PC-9 (cell line): ENCODE measurements at regions of chr5 and their contacts with region 1.

Region 1: DNA sequence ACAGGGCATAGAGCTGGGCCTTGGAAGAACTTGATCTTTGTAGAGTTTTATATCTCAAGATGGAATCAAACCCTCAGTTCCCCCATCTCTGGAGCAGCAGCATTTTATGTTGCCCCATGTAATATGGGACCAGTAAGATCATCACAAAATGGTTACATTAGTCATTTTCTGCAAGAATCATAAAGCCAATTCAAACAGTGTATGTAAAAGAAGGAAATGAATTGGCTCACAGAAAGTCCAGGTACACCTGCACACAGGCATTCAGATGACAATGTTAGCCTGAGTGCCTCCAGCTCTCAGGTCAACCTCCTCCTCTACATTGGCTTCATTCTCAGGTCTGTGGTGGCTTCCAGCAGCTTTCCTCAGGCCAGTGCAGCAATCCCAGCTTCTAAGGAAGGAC is 35.1 kb downstream of the CYFIP2 start:
- DNase-seq: no peak
- H3K4me3 ChIP-seq: no peak overlapping the region
- H3K27ac ChIP-seq: no peak overlapping the region
- H3K4me1 ChIP-seq: no peaks in the 10 kb centered on the region
- H3K27me3 ChIP-seq: peaks cover 7% of the 10 kb centered on the region
- CTCF ChIP-seq: no peak

Region 2: GRCh38 chr5:155594270-155594669 is 1706.8 kb before region 1 on chr5:
- CTCF ChIA-PET with region 1: no interaction called
- POLR2A ChIA-PET with region 1: no interaction called
- intact Hi-C with region 1: no loop called
- DNase-seq: no peak
- H3K4me3 ChIP-seq: no peak overlapping the region
- H3K27ac ChIP-seq: no peak overlapping the region
- H3K4me1 ChIP-seq: no peaks in the 10 kb centered on the region
- H3K27me3 ChIP-seq: no peaks in the 10 kb centered on the region
- CTCF ChIP-seq: no peak

Region 3: GRCh38 chr5:157100140-157100679 is 200.9 kb before region 1 on chr5:
- CTCF ChIA-PET with region 1: no interaction called
- POLR2A ChIA-PET with region 1: no interaction called
- intact Hi-C with region 1: no loop called
- DNase-seq: peak in 1 of 2 experiments; percentile 37
- H3K4me3 ChIP-seq: no peak overlapping the region
- H3K27ac ChIP-seq: peak overlapping the region; percentile 31; the same call in 1 of the 2 replicates
- H3K4me1 ChIP-seq: no peaks in the 10 kb centered on the region; the same call in 1 of the 2 replicates
- H3K27me3 ChIP-seq: no peaks in the 10 kb centered on the region
- CTCF ChIP-seq: no peak

Region 4: GRCh38 chr5:157282150-157282549 is 18.9 kb before region 1 on chr5:
- CTCF ChIA-PET with region 1: no interaction called
- POLR2A ChIA-PET with region 1: no interaction called
- intact Hi-C with region 1: loop called (anchors 1 kb)
- DNase-seq: no peak
- H3K4me3 ChIP-seq: no peak overlapping the region
- H3K27ac ChIP-seq: no peak overlapping the region
- H3K4me1 ChIP-seq: no peaks in the 10 kb centered on the region
- H3K27me3 ChIP-seq: peaks cover 11% of the 10 kb centered on the region; the same call in 1 of the 2 replicates
- CTCF ChIP-seq: no peak

Region 5: DNA sequence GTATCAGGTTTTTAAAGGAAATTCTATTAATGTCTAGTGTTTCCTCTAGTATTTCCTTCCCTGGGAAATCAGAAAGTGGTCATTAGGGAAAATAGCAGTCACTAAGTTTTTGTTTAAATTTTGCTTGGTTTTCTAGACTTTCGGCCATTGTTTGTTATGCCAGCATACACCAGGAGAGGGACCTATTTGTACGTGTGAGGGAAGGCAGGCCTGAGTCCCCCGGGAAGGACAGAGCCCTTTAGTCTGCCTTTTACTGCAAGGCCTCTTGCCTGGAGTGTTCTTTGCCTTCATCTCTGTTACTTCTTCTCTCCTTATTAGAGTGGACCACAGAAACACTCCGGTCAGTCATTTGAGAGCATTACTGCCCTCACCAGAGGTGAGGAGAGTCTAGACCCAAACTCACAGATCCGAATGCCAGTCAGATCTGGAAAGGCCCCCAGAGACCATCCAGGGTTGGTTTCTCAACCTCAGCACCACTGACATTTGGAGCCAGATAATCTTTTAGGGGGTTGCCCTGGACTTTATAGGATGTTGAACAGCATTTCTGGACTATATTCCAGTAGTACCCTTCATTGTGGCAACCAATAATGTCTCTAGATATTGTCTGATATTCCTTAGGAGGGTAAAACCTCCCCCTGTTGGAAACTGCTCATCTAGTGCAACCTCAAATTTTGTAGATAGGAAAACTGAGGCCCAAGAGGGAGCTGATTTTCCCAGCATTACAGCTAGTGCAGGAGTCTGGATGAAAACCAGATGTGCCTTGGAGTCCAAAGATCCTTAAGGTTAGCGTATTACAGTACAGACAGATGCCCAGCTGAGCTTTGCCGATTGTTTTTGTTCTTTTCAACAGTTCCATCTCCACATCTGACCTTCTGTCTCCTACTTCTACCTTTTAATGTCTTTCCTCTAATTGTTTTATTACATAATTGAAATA is 65.9 kb after region 1 on chr5:
- CTCF ChIA-PET with region 1: no interaction called
- POLR2A ChIA-PET with region 1: no interaction called
- intact Hi-C with region 1: no loop called
- DNase-seq: no peak
- H3K4me3 ChIP-seq: no peak overlapping the region
- H3K27ac ChIP-seq: no peak overlapping the region
- H3K4me1 ChIP-seq: no peaks in the 10 kb centered on the region
- H3K27me3 ChIP-seq: no peaks in the 10 kb centered on the region
- CTCF ChIP-seq: peak; percentile 67